ENCODE measurements at regions of chr1 and their contacts with region 1.

Region 1: DNA sequence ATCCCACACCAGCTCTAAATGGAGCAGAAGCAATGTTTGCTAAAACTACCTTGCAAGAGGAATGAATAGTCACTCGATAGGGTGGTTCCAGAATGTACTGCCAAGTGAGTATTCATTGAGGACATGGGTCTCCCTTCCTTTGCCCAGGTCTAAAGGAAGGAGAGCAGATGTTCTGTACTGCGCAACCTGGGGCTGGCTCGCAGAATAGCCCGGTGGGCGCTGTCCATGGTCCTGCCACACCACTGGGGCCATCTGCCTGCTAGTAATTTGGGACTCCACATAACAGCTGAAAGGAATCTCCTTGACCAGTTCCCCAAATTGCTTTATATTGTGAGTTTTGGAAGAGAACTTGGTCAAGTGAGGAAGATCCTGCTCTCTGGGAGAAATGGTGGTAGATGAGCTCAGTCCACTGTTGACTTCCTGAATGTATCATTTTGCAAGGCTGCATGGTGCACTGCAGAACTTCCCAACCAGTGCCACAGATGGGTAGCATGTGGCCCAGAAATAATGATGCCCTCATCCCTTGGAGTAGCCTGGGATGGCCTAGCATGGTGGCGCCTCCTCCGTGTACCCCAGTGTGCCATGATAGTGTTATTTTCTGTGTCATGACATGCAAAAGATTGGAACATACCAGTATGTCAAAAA is 5.7 kb downstream of the SLC6A17 start:
- DNase-seq: peak; percentile 75
- ATAC-seq: peak; percentile 36
- H3K4me3 Mint-ChIP-seq: no peak overlapping the region
- H3K27ac Mint-ChIP-seq: no peak overlapping the region
- H3K4me1 Mint-ChIP-seq: no peaks in the 10 kb centered on the region
- H3K27me3 Mint-ChIP-seq: peaks cover 59% of the 10 kb centered on the region

Region 2: DNA sequence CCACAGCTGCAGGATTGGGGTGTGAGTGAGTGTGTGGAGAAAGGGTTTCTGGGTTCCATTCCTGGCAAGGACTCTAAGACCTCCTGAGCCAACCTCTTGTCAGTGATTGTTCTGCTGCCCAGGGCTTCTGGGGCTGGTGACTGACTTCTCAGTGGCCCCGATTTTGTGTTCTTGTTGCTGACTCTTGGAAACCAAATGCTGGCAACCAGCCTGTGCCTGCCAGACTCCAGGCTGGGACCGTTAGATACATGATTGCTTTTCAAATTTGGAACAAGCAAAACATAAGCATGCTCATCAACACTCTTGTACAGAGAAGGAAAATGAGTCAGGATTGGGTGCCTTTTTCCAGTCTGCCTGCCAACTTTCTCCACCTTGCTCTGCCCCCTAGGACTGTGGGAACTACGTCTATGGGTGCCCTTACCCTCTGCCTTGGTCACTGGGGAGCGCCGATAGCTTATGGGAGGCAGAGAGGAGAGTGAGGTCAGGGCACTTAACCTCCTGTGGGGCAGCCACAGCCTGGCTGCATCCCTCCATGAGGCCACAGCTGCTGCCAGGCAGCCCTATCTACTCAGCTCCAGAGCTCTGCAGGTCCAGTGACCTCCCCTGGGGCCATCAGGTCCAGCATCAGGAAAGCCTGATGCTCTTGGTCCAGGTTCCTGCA is 353.0 kb before region 1 on chr1:
- CTCF ChIA-PET with region 1: no interaction called
- POLR2A ChIA-PET with region 1: no interaction called
- intact Hi-C with region 1: no loop called
- DNase-seq: no peak
- ATAC-seq: peak; percentile 22
- H3K4me3 Mint-ChIP-seq: peak overlapping the region; percentile 34
- H3K27ac Mint-ChIP-seq: peak overlapping the region; percentile 92
- H3K4me1 Mint-ChIP-seq: peaks cover 54% of the 10 kb centered on the region
- H3K27me3 Mint-ChIP-seq: no peaks in the 10 kb centered on the region

Region 3: DNA sequence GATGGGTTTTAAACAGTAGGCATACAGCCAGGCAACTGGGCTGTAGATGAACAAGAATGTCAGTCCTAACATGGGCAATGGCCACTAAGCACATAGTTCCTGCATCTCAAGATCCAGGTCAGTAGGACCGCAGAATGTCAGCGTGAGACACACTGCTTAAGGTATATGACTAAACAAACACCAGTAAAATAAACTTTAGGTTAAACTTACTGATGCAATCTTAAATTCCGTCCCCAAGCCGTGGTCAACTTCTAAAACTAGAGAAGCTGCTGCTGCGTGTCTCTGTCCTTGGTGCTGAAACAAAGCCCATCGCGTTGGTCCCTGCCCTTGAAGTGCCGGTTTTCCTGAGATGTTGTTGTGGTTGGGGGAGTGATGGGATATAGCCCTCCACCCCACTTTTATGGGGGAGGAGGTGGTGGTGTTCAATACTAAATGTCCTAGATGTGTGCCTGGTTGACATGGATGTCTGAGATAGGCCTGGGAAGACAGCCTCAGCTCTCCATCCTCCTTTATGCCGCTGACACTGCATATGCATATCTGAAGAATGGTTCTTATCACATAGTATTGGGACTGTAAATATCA is 590.7 kb after region 1 on chr1:
- CTCF ChIA-PET with region 1: no interaction called
- POLR2A ChIA-PET with region 1: no interaction called
- intact Hi-C with region 1: loop called in 1 of 2 experiments (anchors 2 kb)
- DNase-seq: peak; percentile 79
- ATAC-seq: peak; percentile 23
- H3K4me3 Mint-ChIP-seq: no peak overlapping the region
- H3K27ac Mint-ChIP-seq: no peak overlapping the region
- H3K4me1 Mint-ChIP-seq: no peaks in the 10 kb centered on the region
- H3K27me3 Mint-ChIP-seq: peaks cover 12% of the 10 kb centered on the region

Measured in activated CD4-positive, alpha-beta T cell treated with anti-CD3 and anti-CD28 coated beads for 36 hours (primary cell).